AG04449 (cell line): ENCODE measurements at regions of chr18 and their contacts with region 1.

Region 1: DNA sequence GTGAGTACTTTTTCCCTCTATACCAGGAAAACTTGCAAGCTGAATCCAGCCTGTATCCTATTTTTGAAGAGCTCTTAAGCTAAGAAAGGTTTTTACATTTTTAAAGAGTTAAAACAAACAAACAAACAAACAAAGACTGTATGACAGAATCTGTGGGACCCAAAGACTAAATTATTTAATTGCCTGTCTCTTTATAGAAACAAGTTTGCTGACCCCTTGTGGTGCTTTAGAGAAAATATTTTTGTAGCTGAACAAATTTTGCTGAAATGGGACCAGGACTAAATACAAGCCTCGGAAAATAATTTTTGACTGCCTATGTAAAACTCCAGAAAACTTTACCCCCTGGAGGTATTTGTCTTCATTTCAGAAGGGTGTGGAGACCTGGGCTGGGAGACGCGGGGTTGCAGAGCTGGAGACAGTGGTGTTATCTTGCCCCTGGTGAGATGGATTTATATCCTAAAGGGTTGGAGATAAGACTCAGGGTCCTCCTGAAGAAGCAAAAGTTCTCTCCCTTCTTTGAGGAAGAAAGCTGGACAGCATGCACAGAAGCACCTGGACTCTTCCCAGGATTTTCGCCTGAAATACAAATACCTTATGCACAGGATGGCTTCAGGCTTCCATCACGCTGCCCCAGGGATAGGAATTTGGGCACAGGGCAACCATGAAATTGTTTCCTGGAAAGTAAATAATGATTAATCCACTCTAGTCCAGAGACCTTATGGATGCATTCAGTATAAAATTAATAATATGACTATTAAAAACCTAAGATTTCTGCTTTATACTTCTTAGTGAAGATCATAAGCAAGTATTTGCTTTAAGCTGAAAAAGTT is 54.3 kb downstream of the TMX3 start:
- DNase-seq: no peak
- H3K4me3 ChIP-seq: no peak overlapping the region
- CTCF ChIP-seq: peak; percentile 8

Region 2: GRCh38 chr18:67217551-67218166 is 1442.9 kb before region 1 on chr18:
- CTCF ChIA-PET with region 1: interaction called, 35 read pairs
- POLR2A ChIA-PET with region 1: no interaction called
- DNase-seq: peak; percentile 40
- H3K4me3 ChIP-seq: no peak overlapping the region
- CTCF ChIP-seq: peak; percentile 43

Region 3: DNA sequence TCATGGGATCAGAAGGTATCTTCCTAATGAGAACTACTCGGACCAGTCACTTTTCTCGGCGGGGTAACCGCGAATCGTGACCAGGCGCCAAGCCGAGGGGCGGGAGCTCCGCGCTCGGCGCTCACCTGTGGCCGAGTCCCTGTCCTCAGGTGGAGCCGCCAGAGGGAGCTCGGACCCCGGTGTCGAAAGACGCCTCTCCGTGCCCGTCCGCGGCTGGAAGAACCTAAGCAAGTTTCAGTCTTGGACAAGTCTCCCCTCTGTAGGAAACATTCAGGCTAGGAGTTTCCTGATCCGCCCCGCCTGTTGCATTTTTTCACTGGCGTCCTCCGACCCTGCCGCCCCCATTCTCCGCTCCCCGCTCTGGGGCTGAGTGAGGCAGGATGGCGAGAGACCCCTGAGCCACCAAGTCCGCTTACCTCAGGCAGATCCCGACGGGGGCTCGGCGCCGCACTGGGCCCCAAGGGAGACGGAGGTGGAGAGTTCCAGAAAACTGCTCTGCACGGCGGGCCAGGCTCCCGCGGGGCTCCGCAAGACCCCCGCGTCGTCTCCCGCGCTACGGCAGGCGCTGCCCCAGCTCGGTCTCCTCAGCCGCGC is 1144.5 kb before region 1 on chr18:
- CTCF ChIA-PET with region 1: interaction called, 32 read pairs
- POLR2A ChIA-PET with region 1: interaction called, 3 read pairs
- DNase-seq: peak; percentile 29
- H3K4me3 ChIP-seq: peak overlapping the region; percentile 85
- CTCF ChIP-seq: peak; percentile 91

Region 4: DNA sequence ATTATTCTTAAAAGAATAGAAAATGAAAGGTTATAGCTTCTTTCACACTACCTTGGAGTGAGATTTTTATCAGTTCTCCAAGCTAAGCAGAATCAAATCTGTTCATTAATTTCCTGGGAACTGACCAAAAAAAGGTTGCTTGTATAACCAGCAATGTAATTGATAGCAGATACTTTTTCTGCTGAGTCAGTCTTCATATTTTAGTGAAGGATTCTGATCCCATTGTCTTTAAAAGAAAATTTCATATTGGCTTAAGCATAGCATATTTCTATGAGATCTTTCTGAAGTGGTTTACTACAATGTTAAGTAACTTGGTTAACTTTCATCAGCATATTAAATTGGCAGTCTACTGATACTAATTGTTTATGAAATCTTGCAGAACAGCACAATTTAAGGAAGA is 283.6 kb before region 1 on chr18:
- CTCF ChIA-PET with region 1: no interaction called
- POLR2A ChIA-PET with region 1: no interaction called
- DNase-seq: no peak
- H3K4me3 ChIP-seq: no peak overlapping the region
- CTCF ChIP-seq: no peak

Region 5: DNA sequence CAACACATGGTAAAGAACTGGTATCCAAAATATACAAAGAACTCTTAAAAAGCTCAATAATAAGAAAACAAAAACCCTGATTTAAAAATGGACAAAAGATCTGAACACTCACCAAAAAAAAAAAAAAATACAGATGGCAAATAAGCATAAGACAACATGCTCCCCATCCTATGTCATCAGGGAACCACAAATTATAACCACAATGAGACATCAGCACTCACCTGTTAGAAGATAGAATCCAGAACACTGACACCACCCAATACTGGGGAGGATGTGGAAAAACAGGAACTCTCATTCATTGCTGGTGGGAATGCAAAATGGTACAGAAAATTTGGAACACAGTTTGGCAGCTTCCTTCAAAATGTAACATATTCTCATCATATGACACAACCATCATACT is 12.4 kb before region 1 on chr18:
- CTCF ChIA-PET with region 1: interaction called, 45 read pairs
- POLR2A ChIA-PET with region 1: no interaction called
- DNase-seq: no peak
- H3K4me3 ChIP-seq: no peak overlapping the region
- CTCF ChIP-seq: no peak

Region 6: GRCh38 chr18:68676913-68677312 is 16.3 kb after region 1 on chr18:
- CTCF ChIA-PET with region 1: interaction called, 13 read pairs
- POLR2A ChIA-PET with region 1: no interaction called
- DNase-seq: no peak
- H3K4me3 ChIP-seq: no peak overlapping the region
- CTCF ChIP-seq: peak; percentile 46

Region 7: GRCh38 chr18:69172046-69172445 is 511.5 kb after region 1 on chr18:
- CTCF ChIA-PET with region 1: no interaction called
- POLR2A ChIA-PET with region 1: no interaction called
- DNase-seq: no peak
- H3K4me3 ChIP-seq: no peak overlapping the region
- CTCF ChIP-seq: no peak